BJ (cell line): ENCODE measurements at regions of chr1 and their contacts with region 1.

Region 1: GRCh38 chr1:47432071-47433036 is 5.5 kb upstream of the FOXD2 start:
- DNase-seq: no peak
- H3K4me3 ChIP-seq: no peak overlapping the region
- H3K27me3 ChIP-seq: no peaks in the 10 kb centered on the region
- CTCF ChIP-seq: peak; percentile 81

Region 2: GRCh38 chr1:46070164-46070814 is 1362.1 kb before region 1 on chr1:
- CTCF ChIA-PET with region 1: no interaction called
- POLR2A ChIA-PET with region 1: no interaction called
- DNase-seq: no peak
- H3K4me3 ChIP-seq: no peak overlapping the region
- H3K27me3 ChIP-seq: no peaks in the 10 kb centered on the region
- CTCF ChIP-seq: no peak

Region 3: DNA sequence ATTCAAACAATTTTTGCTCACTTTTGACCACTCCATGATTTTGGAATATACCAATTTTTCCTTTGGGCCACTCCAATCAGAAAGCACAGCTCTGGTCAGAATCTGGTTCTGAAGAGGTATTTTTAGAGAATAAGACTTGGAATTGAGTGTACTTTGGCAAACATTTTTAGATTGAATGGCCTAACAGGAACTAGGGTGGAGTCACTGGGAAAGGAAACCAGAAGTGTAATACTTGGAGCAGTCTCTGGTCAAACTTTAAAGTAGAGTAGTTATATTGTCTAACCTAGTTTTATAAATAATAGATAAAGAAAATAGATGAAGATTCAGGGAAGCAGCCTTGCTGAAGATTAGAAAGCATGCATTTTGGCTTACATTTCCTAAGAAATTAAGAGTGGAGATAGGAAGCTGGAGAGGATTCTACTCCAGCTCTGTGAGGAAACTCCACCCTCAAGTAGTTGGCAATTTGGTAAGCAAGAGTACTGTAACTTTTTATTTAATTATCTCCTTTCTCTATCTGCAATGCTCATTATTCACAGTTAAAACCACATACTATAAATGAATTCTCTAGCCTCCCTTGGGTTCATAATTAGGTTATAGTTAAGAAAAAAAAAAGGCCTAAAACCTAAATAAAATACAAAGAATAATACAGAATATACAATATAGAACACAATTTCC is 134.2 kb before region 1 on chr1:
- CTCF ChIA-PET with region 1: no interaction called
- POLR2A ChIA-PET with region 1: no interaction called
- DNase-seq: no peak
- H3K4me3 ChIP-seq: no peak overlapping the region
- H3K27me3 ChIP-seq: no peaks in the 10 kb centered on the region
- CTCF ChIP-seq: no peak

Region 4: GRCh38 chr1:47409311-47410070 is 22.9 kb before region 1 on chr1:
- CTCF ChIA-PET with region 1: interaction called, 10 read pairs
- POLR2A ChIA-PET with region 1: no interaction called
- DNase-seq: peak; percentile 71
- H3K4me3 ChIP-seq: no peak overlapping the region
- H3K27me3 ChIP-seq: no peaks in the 10 kb centered on the region
- CTCF ChIP-seq: no peak

Region 5: DNA sequence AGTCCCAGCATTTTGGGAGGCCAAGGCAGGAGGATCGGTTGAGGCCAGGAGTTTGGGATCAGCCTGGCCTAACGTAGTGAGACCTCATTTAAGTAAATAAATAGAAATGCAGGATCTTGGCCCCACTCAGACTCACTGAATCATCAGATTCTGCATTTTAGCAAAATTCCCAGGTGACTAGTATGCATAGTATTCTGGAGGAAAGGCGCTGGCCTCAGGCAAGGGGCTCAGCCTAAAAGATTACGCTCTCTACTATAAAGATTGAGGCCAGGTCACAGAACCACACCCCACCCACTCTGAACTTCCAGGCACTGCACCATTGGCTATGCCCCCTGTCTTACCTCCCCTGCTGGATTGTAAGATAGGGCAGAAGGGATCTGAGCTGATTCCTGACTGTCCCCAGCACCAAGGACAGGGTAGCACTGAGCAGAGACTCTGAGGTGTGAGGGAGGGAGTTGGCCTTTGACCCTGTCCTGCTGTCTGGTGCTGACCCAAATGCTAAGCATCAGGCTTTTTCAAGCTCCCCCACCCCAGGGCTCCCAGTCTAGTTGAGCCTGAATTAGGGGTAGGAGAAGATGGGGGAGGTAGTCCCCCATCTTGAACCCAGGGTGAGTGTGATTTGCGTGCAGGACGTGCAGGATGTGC is 13.6 kb before region 1 on chr1:
- CTCF ChIA-PET with region 1: interaction called, 15 read pairs
- POLR2A ChIA-PET with region 1: no interaction called
- DNase-seq: no peak
- H3K4me3 ChIP-seq: no peak overlapping the region
- H3K27me3 ChIP-seq: 0 out of 2 replicates have a peak, but pooled peaks cover 1% of the 10 kb centered on the region
- CTCF ChIP-seq: no peak